ENCODE measurements at regions of chr22 and their contacts with region 1.

Region 1: GRCh38 chr22:50525390-50526068 is at the start of gene SCO2:
- DNase-seq: peak; percentile 94 to 99 (median 97)
- ATAC-seq: peak; percentile 76
- H3K4me3 ChIP-seq: peak within 1 kb of the TSS; percentile 69 to 92
- H3K4me3 Mint-ChIP-seq: peak within 1 kb of the TSS; percentile 88
- H3K27ac ChIP-seq: peak within 1 kb of the TSS; percentile 68 to 82
- H3K27ac Mint-ChIP-seq: peak within 1 kb of the TSS; percentile 89
- H3K4me1 ChIP-seq: peaks cover 43% of the 10 kb centered on the region
- H3K4me1 Mint-ChIP-seq: peaks cover 27% of the 10 kb centered on the region
- H3K27me3 ChIP-seq: no peaks in the 10 kb centered on the region
- H3K27me3 Mint-ChIP-seq: no peaks in the 10 kb centered on the region
- CTCF ChIP-seq: no peak
- total RNA-seq, gene SCO2: 1.5 to 4.2 TPM

Region 2: GRCh38 chr22:50185384-50186087 is 340.0 kb before region 1 on chr22 and contains the start of gene TRABD:
- CTCF ChIA-PET with region 1: no interaction called
- POLR2A ChIA-PET with region 1: interaction called, 8 read pairs
- intact Hi-C with region 1: loop called in 1 of 2 experiments (anchors 5 kb)
- DNase-seq: peak; percentile 79 to 95 (median 87)
- ATAC-seq: peak; percentile 69
- H3K4me3 ChIP-seq: peak within 1 kb of the TSS; percentile 58 to 70
- H3K4me3 Mint-ChIP-seq: peak within 1 kb of the TSS; percentile 93
- H3K27ac ChIP-seq: peak within 1 kb of the TSS; percentile 45 to 71
- H3K27ac Mint-ChIP-seq: peak within 1 kb of the TSS; percentile 93
- H3K4me1 ChIP-seq: peaks cover 40% of the 10 kb centered on the region
- H3K4me1 Mint-ChIP-seq: peaks cover 32% of the 10 kb centered on the region
- H3K27me3 ChIP-seq: no peaks in the 10 kb centered on the region
- H3K27me3 Mint-ChIP-seq: peaks cover 2% of the 10 kb centered on the region
- CTCF ChIP-seq: no peak
- total RNA-seq, gene TRABD: 178 to 187 TPM

Region 3: DNA sequence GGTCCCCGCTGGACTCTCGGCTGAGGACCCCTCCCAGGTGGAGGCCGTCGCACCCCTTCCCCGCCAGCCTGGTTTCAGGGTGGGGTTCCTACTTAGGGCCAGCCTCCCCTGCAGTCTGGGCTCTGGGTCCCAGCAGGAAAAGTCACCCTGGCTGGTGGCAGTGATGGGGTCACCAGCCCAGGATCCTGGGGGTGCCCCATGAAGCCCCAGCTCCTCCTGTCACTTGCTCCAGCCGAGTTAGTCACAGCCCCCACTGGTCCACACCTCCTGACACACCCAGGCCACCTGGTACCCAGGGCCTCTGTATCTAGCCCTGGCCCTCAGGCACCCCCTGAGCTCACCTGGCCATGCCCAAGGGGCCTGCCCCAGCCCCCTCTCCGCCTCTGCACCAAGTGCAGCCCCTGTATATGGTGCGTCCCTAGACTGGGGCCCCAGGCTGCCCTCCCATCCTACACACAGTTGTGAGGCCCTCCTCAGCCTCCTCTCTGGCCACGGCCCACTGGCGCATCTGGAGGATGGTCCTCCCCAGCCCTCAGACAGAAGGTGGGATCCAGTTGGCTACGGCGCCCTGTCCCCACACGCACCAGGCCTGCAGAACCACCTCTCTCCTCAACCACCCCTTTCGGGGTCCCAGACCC is 224.8 kb before region 1 on chr22:
- CTCF ChIA-PET with region 1: no interaction called
- POLR2A ChIA-PET with region 1: no interaction called
- intact Hi-C with region 1: no loop called
- DNase-seq: no peak
- ATAC-seq: no peak
- H3K4me3 ChIP-seq: no peak overlapping the region
- H3K4me3 Mint-ChIP-seq: no peak overlapping the region
- H3K27ac ChIP-seq: no peak overlapping the region
- H3K27ac Mint-ChIP-seq: no peak overlapping the region
- H3K4me1 ChIP-seq: peaks cover under 1% of the 10 kb centered on the region
- H3K4me1 Mint-ChIP-seq: no peaks in the 10 kb centered on the region
- H3K27me3 ChIP-seq: peaks cover 0 to 10% of the 10 kb centered on the region in 2 experiments
- H3K27me3 Mint-ChIP-seq: peaks cover 13% of the 10 kb centered on the region
- CTCF ChIP-seq: no peak

Region 4: DNA sequence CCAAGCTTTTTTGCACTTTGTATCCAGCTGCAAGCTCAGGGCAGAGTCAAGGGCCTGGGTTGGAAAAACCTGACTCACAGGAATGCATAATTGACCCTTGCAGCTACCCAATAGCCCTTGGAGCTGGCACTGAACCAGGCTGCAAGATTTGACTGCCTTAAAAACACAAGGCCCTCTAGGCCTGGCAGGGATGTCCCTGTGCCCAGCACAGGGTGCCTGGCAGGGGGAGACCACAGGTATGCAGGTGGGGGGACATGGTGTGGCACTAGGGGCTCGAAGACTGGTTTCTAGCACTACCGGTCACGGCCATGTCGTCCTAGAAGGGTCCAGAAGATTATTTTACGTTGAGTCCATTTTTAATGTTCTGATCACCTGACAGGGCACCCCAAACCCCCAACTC is 80.9 kb before region 1 on chr22:
- CTCF ChIA-PET with region 1: interaction called, 5 read pairs
- POLR2A ChIA-PET with region 1: interaction called, 11 read pairs
- intact Hi-C with region 1: no loop called
- DNase-seq: peak in 1 of 9 experiments; percentile 4
- ATAC-seq: no peak
- H3K4me3 ChIP-seq: peak overlapping the region in 1 of 2 experiments; percentile 3
- H3K4me3 Mint-ChIP-seq: no peak overlapping the region
- H3K27ac ChIP-seq: peak overlapping the region; percentile 38 to 82
- H3K27ac Mint-ChIP-seq: peak overlapping the region; percentile 93
- H3K4me1 ChIP-seq: peaks cover 36% of the 10 kb centered on the region
- H3K4me1 Mint-ChIP-seq: peaks cover 29% of the 10 kb centered on the region
- H3K27me3 ChIP-seq: no peaks in the 10 kb centered on the region
- H3K27me3 Mint-ChIP-seq: no peaks in the 10 kb centered on the region
- CTCF ChIP-seq: no peak

Region 5: GRCh38 chr22:50507991-50508884 is 17.3 kb before region 1 on chr22 and contains the start of gene NCAPH2:
- CTCF ChIA-PET with region 1: interaction called, 32 read pairs
- POLR2A ChIA-PET with region 1: interaction called, 98 read pairs
- intact Hi-C with region 1: loop called (anchors 1 kb)
- DNase-seq: peak in 8 of 9 experiments; percentile 94 to 99 (median 98)
- ATAC-seq: peak; percentile 74
- H3K4me3 ChIP-seq: peak within 1 kb of the TSS; percentile 88 to 97
- H3K4me3 Mint-ChIP-seq: peak within 1 kb of the TSS; percentile 96
- H3K27ac ChIP-seq: peak within 1 kb of the TSS; percentile 93
- H3K27ac Mint-ChIP-seq: peak within 1 kb of the TSS; percentile 99
- H3K4me1 ChIP-seq: peaks cover 23% of the 10 kb centered on the region
- H3K4me1 Mint-ChIP-seq: peaks cover 26% of the 10 kb centered on the region
- H3K27me3 ChIP-seq: no peaks in the 10 kb centered on the region
- H3K27me3 Mint-ChIP-seq: no peaks in the 10 kb centered on the region
- CTCF ChIP-seq: no peak
- total RNA-seq, gene NCAPH2: 206 to 209 TPM

Region 6: DNA sequence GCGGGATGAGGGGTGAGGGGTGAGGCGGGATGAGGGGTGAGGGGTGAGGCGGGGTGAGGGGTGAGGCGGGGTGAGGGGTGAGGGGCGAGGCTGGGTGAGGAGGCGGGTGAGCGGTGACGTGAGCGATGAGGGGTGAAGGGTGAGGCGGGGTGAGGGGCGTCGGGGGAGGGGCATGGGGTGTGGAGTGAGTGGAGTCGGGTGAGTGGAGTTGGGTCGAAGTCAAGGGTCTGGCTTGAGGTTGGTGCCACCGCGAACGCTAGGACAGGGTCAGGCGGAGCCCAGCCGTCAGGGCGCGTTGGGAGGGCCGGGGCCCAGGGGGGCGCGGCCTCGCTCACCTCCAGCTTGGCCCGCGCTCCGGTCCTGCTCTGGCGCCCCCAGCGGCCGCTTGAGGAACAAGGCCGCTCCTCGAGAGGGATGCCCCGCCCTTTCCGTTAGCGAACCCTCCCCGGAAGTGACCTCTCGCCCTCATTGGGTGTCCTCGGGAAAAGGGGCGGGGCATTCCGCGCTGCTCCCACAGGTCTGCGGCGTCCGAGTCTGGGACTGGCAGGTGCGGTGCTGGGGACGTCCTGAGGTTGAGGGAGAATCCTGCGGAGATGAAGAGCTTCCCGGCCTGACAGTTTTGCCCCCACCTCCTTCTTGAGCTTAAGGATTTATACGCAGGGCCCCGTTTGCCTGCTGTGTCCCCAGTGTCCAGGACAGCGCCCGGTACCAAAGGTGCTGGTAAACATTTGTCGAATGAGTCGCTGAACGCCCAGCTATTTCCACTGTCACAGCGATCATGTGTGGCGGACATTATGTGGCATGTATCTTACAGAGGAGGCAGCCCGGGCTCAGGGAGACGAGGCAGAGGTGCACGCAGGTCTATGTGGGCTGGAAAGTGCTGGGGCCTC is 37.2 kb after region 1 on chr22 and contains the start of gene SYCE3:
- CTCF ChIA-PET with region 1: interaction called, 35 read pairs
- POLR2A ChIA-PET with region 1: interaction called, 19 read pairs
- intact Hi-C with region 1: loop called (anchors 1 kb)
- DNase-seq: peak; percentile 93 to 98 (median 97)
- ATAC-seq: peak; percentile 98
- H3K4me3 ChIP-seq: peak within 1 kb of the TSS; percentile 57 to 67
- H3K4me3 Mint-ChIP-seq: peak within 1 kb of the TSS; percentile 94
- H3K27ac ChIP-seq: peak within 1 kb of the TSS; percentile 17 to 47
- H3K27ac Mint-ChIP-seq: peak within 1 kb of the TSS; percentile 91
- H3K4me1 ChIP-seq: peaks cover 10% of the 10 kb centered on the region
- H3K4me1 Mint-ChIP-seq: peaks cover 20% of the 10 kb centered on the region
- H3K27me3 ChIP-seq: no peaks in the 10 kb centered on the region
- H3K27me3 Mint-ChIP-seq: no peaks in the 10 kb centered on the region
- CTCF ChIP-seq: peak; percentile 91
- total RNA-seq, gene SYCE3: not detected